Naive thymus-derived CD4-positive, alpha-beta T cell (primary cell): ENCODE measurements at regions of chr1 and their contacts with region 1.

Region 1: DNA sequence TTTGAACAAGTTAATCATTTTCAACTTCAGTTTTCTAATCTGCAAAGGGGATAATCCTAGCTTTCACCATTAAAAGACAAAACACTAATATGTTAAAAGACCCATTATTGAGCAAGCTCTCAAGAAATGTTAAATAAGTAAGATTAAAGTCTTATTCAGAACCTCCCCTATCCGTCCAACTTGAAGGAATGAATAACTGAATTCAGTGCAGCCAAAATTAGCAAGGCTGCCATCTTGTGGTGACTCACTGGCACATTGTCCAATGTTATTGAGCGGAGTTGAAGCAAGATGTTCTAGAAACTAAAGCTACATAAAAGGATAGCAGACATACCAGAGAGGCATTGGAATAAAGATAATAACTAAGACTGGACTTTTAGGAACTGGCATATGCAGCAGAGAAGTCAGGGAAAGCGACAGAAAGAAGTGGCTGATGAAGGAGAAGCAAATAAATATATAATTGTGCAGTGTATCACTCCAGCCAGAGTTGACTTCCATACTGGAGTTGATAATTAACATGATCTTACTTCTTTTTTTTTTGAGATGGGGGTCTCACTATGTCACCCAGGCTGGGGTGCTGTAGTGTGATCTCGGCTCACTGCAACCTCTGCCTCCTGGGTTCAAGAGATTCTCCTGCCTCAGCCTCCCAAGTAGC is 8.2 kb upstream of the CAP1 start:
- DNase-seq: peak in 7 of 9 donors; percentile 21 to 55 (median 47)
- ATAC-seq: peak; percentile 79
- H3K4me3 ChIP-seq: no peak overlapping the region
- H3K4me3 Mint-ChIP-seq: peak overlapping the region in 4 of 10 donors; percentile 1 to 49 (median 5)
- H3K27ac ChIP-seq: no peak overlapping the region
- H3K27ac Mint-ChIP-seq: peak overlapping the region in 7 of 9 donors; percentile 38 to 72 (median 53)
- H3K4me1 ChIP-seq: peaks cover 25 to 43% of the 10 kb centered on the region in 2 donors
- H3K4me1 Mint-ChIP-seq: peaks cover 28 to 76% (median 56%) of the 10 kb centered on the region in 7 donors
- H3K27me3 ChIP-seq: no peaks in the 10 kb centered on the region
- H3K27me3 Mint-ChIP-seq: peaks cover 0 to 16% (median 0%) of the 10 kb centered on the region in 5 donors

Region 2: DNA sequence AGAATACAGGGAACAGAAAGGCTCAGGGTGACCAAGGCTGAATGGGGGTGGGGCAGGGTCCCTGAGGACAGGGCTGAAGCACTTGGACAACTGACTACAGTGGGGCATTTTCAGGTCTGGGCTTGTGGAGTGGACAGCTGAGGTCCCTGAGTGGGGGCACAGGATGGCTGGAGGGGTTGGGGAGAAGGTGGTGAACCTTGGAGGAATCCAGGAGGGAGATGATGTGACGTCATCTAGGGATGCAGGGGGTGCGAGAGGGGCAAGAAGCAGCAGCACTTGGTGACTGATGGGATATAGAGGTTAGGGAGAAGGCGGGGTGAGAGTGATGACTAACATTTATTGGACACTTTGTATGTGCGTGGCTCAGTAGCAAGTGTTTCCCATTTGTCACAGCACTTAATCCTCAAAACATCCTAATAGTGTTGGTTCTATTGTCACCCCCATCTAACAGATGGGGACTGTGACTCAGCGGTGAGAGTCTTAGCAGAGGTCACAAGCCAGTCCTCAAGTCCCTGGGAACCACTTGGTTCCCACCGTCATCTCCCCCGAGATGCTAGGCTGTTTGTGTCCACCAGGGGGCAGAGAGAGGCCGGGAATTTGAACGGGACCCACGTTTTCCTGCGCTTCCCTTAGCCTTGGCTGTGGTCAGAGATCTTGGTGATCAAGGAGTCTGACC is 215.8 kb before region 1 on chr1:
- CTCF ChIA-PET with region 1: interaction called, 11 read pairs
- POLR2A ChIA-PET with region 1: no interaction called
- intact Hi-C with region 1: loop called (anchors 1 to 2 kb)
- DNase-seq: peak; percentile 16 to 73 (median 41)
- ATAC-seq: peak; percentile 84
- H3K4me3 ChIP-seq: peak overlapping the region; percentile 31
- H3K4me3 Mint-ChIP-seq: peak overlapping the region; percentile 35 to 94 (median 85)
- H3K27ac ChIP-seq: no peak overlapping the region
- H3K27ac Mint-ChIP-seq: peak overlapping the region in 4 of 9 donors; percentile 43 to 85 (median 70)
- H3K4me1 ChIP-seq: no peaks in the 10 kb centered on the region
- H3K4me1 Mint-ChIP-seq: peaks cover 6 to 15% (median 8%) of the 10 kb centered on the region in 7 donors
- H3K27me3 ChIP-seq: peaks cover 0 to 2% of the 10 kb centered on the region in 2 donors
- H3K27me3 Mint-ChIP-seq: peaks cover 0 to 28% (median 4%) of the 10 kb centered on the region in 5 donors

Region 3: GRCh38 chr1:39919545-39919944 is 112.8 kb before region 1 on chr1:
- CTCF ChIA-PET with region 1: interaction called, 30 read pairs
- POLR2A ChIA-PET with region 1: interaction called, 3 read pairs
- intact Hi-C with region 1: loop called (anchors 1 kb)
- DNase-seq: peak in 8 of 9 donors; percentile 48 to 76 (median 67)
- ATAC-seq: peak; percentile 93
- H3K4me3 ChIP-seq: no peak overlapping the region
- H3K4me3 Mint-ChIP-seq: no peak overlapping the region
- H3K27ac ChIP-seq: no peak overlapping the region
- H3K27ac Mint-ChIP-seq: no peak overlapping the region
- H3K4me1 ChIP-seq: no peaks in the 10 kb centered on the region
- H3K4me1 Mint-ChIP-seq: peaks cover 0 to 4% (median 0%) of the 10 kb centered on the region in 7 donors
- H3K27me3 ChIP-seq: no peaks in the 10 kb centered on the region
- H3K27me3 Mint-ChIP-seq: peaks cover 0 to 8% (median 4%) of the 10 kb centered on the region in 5 donors

Region 4: DNA sequence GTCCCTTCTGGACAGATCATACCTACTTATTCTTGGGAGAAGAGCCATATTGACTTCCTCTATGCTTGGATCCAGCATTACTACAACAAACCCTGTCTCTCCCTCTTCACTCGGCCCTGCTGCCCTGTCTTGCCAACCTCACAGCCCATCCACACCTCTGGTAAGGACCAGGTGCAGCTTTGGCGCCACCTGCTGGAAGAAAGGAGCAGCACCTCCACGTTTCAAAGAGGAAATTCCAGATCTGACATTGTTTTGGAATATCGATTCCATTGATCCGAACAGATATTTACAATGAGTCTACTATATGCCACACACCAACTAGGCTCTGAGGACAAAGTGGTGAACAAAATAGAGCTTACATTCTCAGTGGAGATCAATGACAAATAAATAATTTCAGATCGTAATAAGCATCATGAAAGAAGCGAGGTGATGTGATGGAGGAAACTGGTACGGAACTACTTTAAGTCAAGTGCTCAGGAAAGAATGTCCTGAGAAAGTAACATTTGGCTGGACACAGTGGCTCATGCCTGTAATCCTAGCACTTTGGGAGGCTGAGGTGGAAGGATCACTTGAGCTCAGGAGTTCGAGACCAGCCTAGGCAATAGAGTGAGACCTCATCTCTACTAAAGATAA is 58.7 kb before region 1 on chr1:
- CTCF ChIA-PET with region 1: interaction called, 6 read pairs
- POLR2A ChIA-PET with region 1: no interaction called
- intact Hi-C with region 1: loop called in 1 of 2 experiments (anchors 1 kb)
- DNase-seq: peak; percentile 49 to 73 (median 63)
- ATAC-seq: peak; percentile 85
- H3K4me3 ChIP-seq: no peak overlapping the region
- H3K4me3 Mint-ChIP-seq: peak overlapping the region in 1 of 10 donors; percentile 9
- H3K27ac ChIP-seq: no peak overlapping the region
- H3K27ac Mint-ChIP-seq: no peak overlapping the region
- H3K4me1 ChIP-seq: no peaks in the 10 kb centered on the region
- H3K4me1 Mint-ChIP-seq: peaks cover 4 to 6% (median 5%) of the 10 kb centered on the region in 7 donors
- H3K27me3 ChIP-seq: no peaks in the 10 kb centered on the region
- H3K27me3 Mint-ChIP-seq: peaks cover 0 to 3% (median 0%) of the 10 kb centered on the region in 5 donors

Region 5: DNA sequence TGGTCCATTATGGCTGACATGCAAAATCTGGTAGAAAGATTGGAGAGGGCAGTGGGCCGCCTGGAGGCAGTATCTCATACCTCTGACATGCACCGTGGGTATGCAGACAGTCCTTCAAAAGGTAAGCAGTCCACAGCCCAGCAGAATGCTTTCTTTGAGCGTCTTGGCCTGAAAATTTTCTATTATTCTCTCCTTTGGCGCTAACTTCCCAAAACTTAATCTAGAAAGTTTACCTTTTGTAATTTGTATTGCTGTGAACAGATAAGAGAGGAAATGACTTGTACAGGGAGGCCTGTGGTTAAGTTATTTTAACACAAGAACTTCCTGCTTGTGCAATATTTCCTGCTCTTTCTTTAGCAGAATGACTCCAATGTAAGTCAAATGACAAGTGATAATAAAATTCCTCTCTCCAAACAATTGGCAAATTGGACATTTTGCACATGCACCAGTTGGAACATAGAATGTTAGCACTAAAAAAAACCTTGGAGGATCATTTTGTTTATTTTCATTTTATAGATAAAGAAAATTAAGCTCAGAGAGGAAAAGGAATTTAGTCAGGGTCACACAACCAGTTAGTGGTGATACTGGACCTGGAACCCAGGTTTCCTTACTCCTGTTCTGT is 27.1 kb after region 1 on chr1:
- CTCF ChIA-PET with region 1: interaction called, 4 read pairs
- POLR2A ChIA-PET with region 1: interaction called, 306 read pairs
- intact Hi-C with region 1: no loop called
- DNase-seq: peak in 7 of 9 donors; percentile 33 to 65 (median 56)
- ATAC-seq: peak; percentile 83
- H3K4me3 ChIP-seq: peak overlapping the region; percentile 21
- H3K4me3 Mint-ChIP-seq: peak overlapping the region; percentile 65 to 90 (median 82)
- H3K27ac ChIP-seq: peak overlapping the region; percentile 77
- H3K27ac Mint-ChIP-seq: peak overlapping the region; percentile 79 to 97 (median 88)
- H3K4me1 ChIP-seq: peaks cover 64 to 87% of the 10 kb centered on the region in 2 donors
- H3K4me1 Mint-ChIP-seq: peaks cover 79 to 99% (median 91%) of the 10 kb centered on the region in 7 donors
- H3K27me3 ChIP-seq: no peaks in the 10 kb centered on the region
- H3K27me3 Mint-ChIP-seq: no peaks in the 10 kb centered on the region

Region 6: GRCh38 chr1:40094466-40095110 is 62.2 kb after region 1 on chr1:
- CTCF ChIA-PET with region 1: no interaction called
- POLR2A ChIA-PET with region 1: no interaction called
- intact Hi-C with region 1: no loop called
- DNase-seq: no peak
- ATAC-seq: no peak
- H3K4me3 ChIP-seq: no peak overlapping the region
- H3K4me3 Mint-ChIP-seq: no peak overlapping the region
- H3K27ac ChIP-seq: no peak overlapping the region
- H3K27ac Mint-ChIP-seq: peak overlapping the region in 7 of 9 donors; percentile 6 to 78 (median 43)
- H3K4me1 ChIP-seq: peaks cover 13 to 14% of the 10 kb centered on the region in 2 donors
- H3K4me1 Mint-ChIP-seq: peaks cover 26 to 47% (median 34%) of the 10 kb centered on the region in 7 donors
- H3K27me3 ChIP-seq: no peaks in the 10 kb centered on the region
- H3K27me3 Mint-ChIP-seq: peaks cover 0 to 4% (median 0%) of the 10 kb centered on the region in 5 donors